ENCODE measurements at regions of chr16 and their contacts with region 1.

Region 1: GRCh38 chr16:81873843-81874752 is 95.0 kb downstream of the PLCG2 start:
- DNase-seq: peak; percentile 84
- H3K4me3 Mint-ChIP-seq: no peak overlapping the region
- H3K27ac Mint-ChIP-seq: no peak overlapping the region
- H3K4me1 Mint-ChIP-seq: peaks cover 7% of the 10 kb centered on the region
- H3K27me3 Mint-ChIP-seq: peaks cover 6% of the 10 kb centered on the region

Region 2: GRCh38 chr16:81551151-81551808 is 322.8 kb before region 1 on chr16:
- intact Hi-C with region 1: no loop called
- DNase-seq: peak; percentile 58
- H3K4me3 Mint-ChIP-seq: peak overlapping the region; percentile 10
- H3K27ac Mint-ChIP-seq: peak overlapping the region; percentile 81
- H3K4me1 Mint-ChIP-seq: peaks cover 24% of the 10 kb centered on the region
- H3K27me3 Mint-ChIP-seq: no peaks in the 10 kb centered on the region

Region 3: GRCh38 chr16:81745704-81746558 is 128.2 kb before region 1 on chr16:
- intact Hi-C with region 1: loop called (anchors 5 kb)
- DNase-seq: peak; percentile 93
- H3K4me3 Mint-ChIP-seq: peak overlapping the region; percentile 84
- H3K27ac Mint-ChIP-seq: peak overlapping the region; percentile 86
- H3K4me1 Mint-ChIP-seq: peaks cover 19% of the 10 kb centered on the region
- H3K27me3 Mint-ChIP-seq: no peaks in the 10 kb centered on the region

Region 4: GRCh38 chr16:81779536-81780320 is 94.4 kb before region 1 on chr16:
- intact Hi-C with region 1: loop called (anchors 5 kb)
- DNase-seq: peak; percentile 72
- H3K4me3 Mint-ChIP-seq: peak overlapping the region; percentile 91
- H3K27ac Mint-ChIP-seq: peak overlapping the region; percentile 20
- H3K4me1 Mint-ChIP-seq: peaks cover 10% of the 10 kb centered on the region
- H3K27me3 Mint-ChIP-seq: peaks cover 54% of the 10 kb centered on the region

Region 5: GRCh38 chr16:81798311-81799137 is 75.6 kb before region 1 on chr16:
- intact Hi-C with region 1: loop called (anchors 5 kb)
- DNase-seq: peak; percentile 70
- H3K4me3 Mint-ChIP-seq: peak overlapping the region; percentile 63
- H3K27ac Mint-ChIP-seq: peak overlapping the region; percentile 88
- H3K4me1 Mint-ChIP-seq: peaks cover 29% of the 10 kb centered on the region
- H3K27me3 Mint-ChIP-seq: no peaks in the 10 kb centered on the region